Right ventricle myocardium superior (tissue), 1 donor: ENCODE measurements at regions of chr2 and their contacts with region 1.

Region 1: GRCh38 chr2:191030521-191031154 is 16.7 kb upstream of the STAT1 start:
- DNase-seq: no peak
- ATAC-seq: peak; percentile 79

Region 2: DNA sequence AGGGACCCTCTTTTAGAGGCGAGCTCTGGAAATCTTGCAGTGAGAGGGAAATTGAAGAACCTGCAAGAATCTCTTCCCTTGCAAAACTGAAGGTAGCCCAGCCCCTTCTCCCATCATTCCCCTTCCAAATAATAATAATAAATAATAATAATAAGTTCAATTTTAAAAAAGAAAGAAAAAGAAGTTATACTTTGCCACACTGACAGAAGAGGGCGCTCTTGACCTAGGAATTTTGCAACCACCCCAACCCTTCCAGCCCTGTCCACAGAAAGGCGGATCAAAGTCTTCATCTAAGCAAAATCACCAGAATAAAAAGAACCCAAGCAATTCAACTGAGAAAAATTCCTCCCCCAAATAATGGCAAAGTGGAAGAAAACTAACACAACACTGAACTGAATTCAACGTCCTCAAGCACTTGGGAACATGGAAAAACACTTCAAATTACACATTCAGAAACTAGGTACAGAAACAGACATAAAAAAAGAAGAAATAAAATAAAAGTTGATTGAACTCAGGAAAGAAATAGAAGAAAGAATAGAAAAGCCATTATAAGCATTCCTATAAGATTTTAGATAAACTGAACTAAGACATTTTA is 248.9 kb before region 1 on chr2:
- intact Hi-C with region 1: loop called (anchors 5 kb)
- DNase-seq: no peak
- ATAC-seq: peak; percentile 68